ENCODE measurements at regions of chr7 and their contacts with region 1.

Region 1: GRCh38 chr7:55179931-55180661 is 161.3 kb downstream of the EGFR start:
- DNase-seq: peak in 1 of 2 experiments; percentile 9
- H3K4me3 ChIP-seq: no peak overlapping the region
- H3K4me3 Mint-ChIP-seq: peak overlapping the region; percentile 68
- H3K27ac Mint-ChIP-seq: peak overlapping the region; percentile 92
- H3K4me1 ChIP-seq: peaks cover 70% of the 10 kb centered on the region
- H3K4me1 Mint-ChIP-seq: peaks cover 44% of the 10 kb centered on the region
- H3K27me3 ChIP-seq: no peaks in the 10 kb centered on the region
- H3K27me3 Mint-ChIP-seq: no peaks in the 10 kb centered on the region
- CTCF ChIP-seq: no peak

Region 2: DNA sequence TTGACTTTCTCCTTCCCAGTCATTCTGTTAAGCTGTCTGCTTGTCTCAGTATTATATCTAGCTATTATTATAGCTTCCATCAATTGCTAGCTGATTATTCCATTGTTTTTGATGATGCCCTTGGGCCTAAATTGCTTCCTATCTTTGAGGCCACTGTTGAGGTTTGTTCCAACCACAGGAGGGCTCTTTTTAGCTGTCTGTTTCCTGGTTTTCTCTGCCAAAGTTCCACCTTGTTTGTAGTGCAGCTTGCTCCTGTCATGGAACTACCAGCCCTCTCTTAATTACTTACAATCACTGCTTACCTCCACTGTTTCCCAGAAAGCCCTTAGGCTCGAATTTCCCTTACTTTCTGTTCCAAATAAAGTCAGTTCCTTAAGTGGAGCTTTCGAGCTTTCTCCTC is 302.4 kb before region 1 on chr7:
- CTCF ChIA-PET with region 1: interaction called, 3 read pairs
- POLR2A ChIA-PET with region 1: no interaction called
- intact Hi-C with region 1: loop called (anchors 1 kb)
- DNase-seq: peak in 1 of 2 experiments; percentile 36
- H3K4me3 ChIP-seq: no peak overlapping the region
- H3K4me3 Mint-ChIP-seq: no peak overlapping the region
- H3K27ac Mint-ChIP-seq: peak overlapping the region; percentile 8
- H3K4me1 ChIP-seq: peaks cover 44% of the 10 kb centered on the region
- H3K4me1 Mint-ChIP-seq: peaks cover 30% of the 10 kb centered on the region
- H3K27me3 ChIP-seq: no peaks in the 10 kb centered on the region
- H3K27me3 Mint-ChIP-seq: no peaks in the 10 kb centered on the region
- CTCF ChIP-seq: peak in 1 of 2 experiments; percentile 37

Region 3: DNA sequence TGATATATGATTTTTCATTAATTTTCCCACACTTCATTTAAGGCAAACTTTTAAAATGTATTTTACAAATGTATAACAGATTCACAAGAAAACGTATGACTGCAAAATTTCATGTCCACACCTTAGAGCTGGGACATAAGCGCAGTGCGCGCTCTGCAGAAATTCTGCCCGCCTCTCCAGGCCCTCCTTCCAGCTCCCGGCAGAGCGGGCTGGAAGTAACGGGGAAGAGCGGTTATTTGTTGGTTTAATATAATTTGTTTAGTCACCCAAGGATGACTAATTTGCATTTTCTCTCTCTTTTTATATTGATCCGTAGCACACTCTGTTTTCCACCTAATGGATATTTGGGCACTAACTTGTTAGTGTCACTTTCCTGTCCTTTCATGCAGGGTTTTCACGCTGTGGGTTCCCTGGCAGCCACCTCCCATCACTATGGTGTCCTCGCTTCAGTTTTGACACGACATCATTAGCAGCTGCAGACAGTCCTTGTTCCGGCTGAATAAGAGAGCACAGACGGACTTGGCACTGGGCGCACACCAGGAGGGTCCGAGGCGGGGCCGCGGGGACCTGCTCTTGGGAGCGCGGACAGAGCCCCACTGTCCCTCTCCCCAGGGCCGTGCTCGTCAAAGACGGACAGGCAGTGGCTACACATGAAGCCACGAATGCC is 291.9 kb before region 1 on chr7:
- CTCF ChIA-PET with region 1: no interaction called
- POLR2A ChIA-PET with region 1: no interaction called
- intact Hi-C with region 1: no loop called
- DNase-seq: no peak
- H3K4me3 ChIP-seq: no peak overlapping the region
- H3K4me3 Mint-ChIP-seq: no peak overlapping the region
- H3K27ac Mint-ChIP-seq: no peak overlapping the region
- H3K4me1 ChIP-seq: peaks cover 6% of the 10 kb centered on the region
- H3K4me1 Mint-ChIP-seq: no peaks in the 10 kb centered on the region
- H3K27me3 ChIP-seq: no peaks in the 10 kb centered on the region
- H3K27me3 Mint-ChIP-seq: no peaks in the 10 kb centered on the region
- CTCF ChIP-seq: no peak

Region 4: DNA sequence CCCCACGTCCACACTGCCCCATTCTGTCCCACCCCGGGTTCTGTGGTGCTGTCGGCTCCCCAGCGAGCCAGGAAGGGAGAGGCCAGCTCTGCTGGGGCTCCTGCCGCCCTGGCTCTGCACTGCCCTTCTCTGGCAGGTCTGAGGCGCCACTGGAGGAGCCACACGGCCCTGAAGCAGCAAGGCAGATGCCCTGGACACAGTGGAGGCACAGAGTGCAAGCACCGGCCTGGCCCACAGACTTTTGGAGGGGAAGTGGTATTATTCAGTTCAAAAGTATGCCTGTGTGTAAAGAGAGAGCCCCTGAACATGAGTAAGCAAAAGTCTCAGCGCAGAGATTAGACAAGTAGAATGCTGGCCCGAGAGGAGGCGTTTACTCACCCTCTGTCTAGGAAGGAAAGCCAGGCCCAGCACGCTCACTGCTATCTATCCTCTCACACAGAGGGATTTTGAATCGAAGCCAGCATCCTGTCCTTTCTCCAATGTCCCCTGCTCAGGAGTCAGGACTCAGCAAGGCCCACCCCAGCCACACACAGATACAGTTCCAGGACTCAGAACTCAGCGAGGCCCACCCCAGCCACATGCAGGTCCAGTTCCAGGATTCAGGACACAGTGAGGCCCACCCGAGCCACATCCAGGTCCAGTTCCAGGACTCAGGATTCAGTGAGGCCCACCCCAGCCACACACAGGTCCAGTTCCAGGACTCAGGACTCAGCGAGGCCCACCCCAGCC is 46.3 kb before region 1 on chr7:
- CTCF ChIA-PET with region 1: interaction called, 3 read pairs
- POLR2A ChIA-PET with region 1: no interaction called
- intact Hi-C with region 1: loop called (anchors 2 kb)
- DNase-seq: no peak
- H3K4me3 ChIP-seq: no peak overlapping the region
- H3K4me3 Mint-ChIP-seq: no peak overlapping the region
- H3K27ac Mint-ChIP-seq: peak overlapping the region; percentile 72
- H3K4me1 ChIP-seq: peaks cover 40% of the 10 kb centered on the region
- H3K4me1 Mint-ChIP-seq: peaks cover 25% of the 10 kb centered on the region
- H3K27me3 ChIP-seq: no peaks in the 10 kb centered on the region
- H3K27me3 Mint-ChIP-seq: no peaks in the 10 kb centered on the region
- CTCF ChIP-seq: no peak

Region 5: DNA sequence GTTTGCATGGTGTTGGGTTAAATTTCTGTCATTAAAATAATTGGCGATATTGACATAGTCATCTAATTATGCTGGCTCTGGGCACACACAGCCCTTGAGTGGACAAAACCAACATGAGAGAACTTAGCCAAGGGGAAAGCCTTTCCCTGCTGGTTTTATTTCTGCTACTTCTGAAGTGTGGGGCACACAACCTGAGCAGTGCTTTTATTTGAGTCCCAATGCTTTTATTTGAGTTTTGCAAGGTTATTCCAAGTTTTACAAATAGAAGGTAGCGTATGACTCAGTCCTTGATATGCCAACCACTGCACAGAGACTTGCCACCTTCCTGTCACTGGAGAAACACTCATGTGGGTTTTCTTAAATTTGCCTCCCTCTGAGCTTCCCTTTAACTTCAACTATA is 15.6 kb before region 1 on chr7:
- CTCF ChIA-PET with region 1: no interaction called
- POLR2A ChIA-PET with region 1: no interaction called
- intact Hi-C with region 1: no loop called
- DNase-seq: no peak
- H3K4me3 ChIP-seq: no peak overlapping the region
- H3K4me3 Mint-ChIP-seq: no peak overlapping the region
- H3K27ac Mint-ChIP-seq: no peak overlapping the region
- H3K4me1 ChIP-seq: no peaks in the 10 kb centered on the region
- H3K4me1 Mint-ChIP-seq: no peaks in the 10 kb centered on the region
- H3K27me3 ChIP-seq: no peaks in the 10 kb centered on the region
- H3K27me3 Mint-ChIP-seq: no peaks in the 10 kb centered on the region
- CTCF ChIP-seq: no peak

Region 6: GRCh38 chr7:55207436-55208125 is 27.5 kb after region 1 on chr7:
- CTCF ChIA-PET with region 1: no interaction called
- POLR2A ChIA-PET with region 1: no interaction called
- intact Hi-C with region 1: loop called (anchors 1 kb)
- DNase-seq: no peak
- H3K4me3 ChIP-seq: no peak overlapping the region
- H3K4me3 Mint-ChIP-seq: no peak overlapping the region
- H3K27ac Mint-ChIP-seq: no peak overlapping the region
- H3K4me1 ChIP-seq: peaks cover 11% of the 10 kb centered on the region; the same call in 1 of the 2 replicates
- H3K4me1 Mint-ChIP-seq: peaks cover 10% of the 10 kb centered on the region
- H3K27me3 ChIP-seq: no peaks in the 10 kb centered on the region
- H3K27me3 Mint-ChIP-seq: no peaks in the 10 kb centered on the region
- CTCF ChIP-seq: no peak